Activated B cell treated with CpG ODN at 0.5 μM for 24 hours (primary cell): ENCODE measurements at regions of chr6 and their contacts with region 1.

Region 1: DNA sequence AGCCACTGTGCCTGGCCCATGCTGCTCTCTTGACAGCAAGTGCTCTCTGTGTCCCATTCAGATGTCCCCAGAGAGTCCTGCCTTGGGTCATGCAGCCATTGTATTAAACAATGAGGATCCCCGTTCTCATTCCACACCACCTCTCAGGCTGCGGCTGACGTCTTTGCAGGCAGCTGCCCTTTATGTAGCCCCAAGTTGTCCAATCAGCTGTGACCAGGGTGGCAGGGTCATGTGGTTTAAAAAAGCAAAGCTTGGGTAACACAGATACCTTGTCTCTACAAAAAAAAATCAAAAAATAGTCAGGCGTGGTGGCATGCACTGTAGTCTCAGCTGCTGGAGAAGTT is 13.2 kb downstream of the GCNT2 start:
- DNase-seq: peak; percentile 45
- ATAC-seq: peak; percentile 58
- H3K4me3 Mint-ChIP-seq: peak overlapping the region; percentile 88
- H3K27ac Mint-ChIP-seq: peak overlapping the region; percentile 99
- H3K4me1 Mint-ChIP-seq: peaks cover 92% of the 10 kb centered on the region
- H3K27me3 Mint-ChIP-seq: no peaks in the 10 kb centered on the region
- CTCF ChIP-seq: no peak

Region 2: GRCh38 chr6:10643201-10643651 is 108.8 kb after region 1 on chr6:
- CTCF ChIA-PET with region 1: no interaction called
- POLR2A ChIA-PET with region 1: interaction called, 8 read pairs
- intact Hi-C with region 1: loop called (anchors 2 kb)
- DNase-seq: no peak
- ATAC-seq: peak; percentile 91
- H3K4me3 Mint-ChIP-seq: peak overlapping the region; percentile 55
- H3K27ac Mint-ChIP-seq: peak overlapping the region; percentile 15
- H3K4me1 Mint-ChIP-seq: peaks cover 28% of the 10 kb centered on the region
- H3K27me3 Mint-ChIP-seq: no peaks in the 10 kb centered on the region
- CTCF ChIP-seq: no peak

Region 3: DNA sequence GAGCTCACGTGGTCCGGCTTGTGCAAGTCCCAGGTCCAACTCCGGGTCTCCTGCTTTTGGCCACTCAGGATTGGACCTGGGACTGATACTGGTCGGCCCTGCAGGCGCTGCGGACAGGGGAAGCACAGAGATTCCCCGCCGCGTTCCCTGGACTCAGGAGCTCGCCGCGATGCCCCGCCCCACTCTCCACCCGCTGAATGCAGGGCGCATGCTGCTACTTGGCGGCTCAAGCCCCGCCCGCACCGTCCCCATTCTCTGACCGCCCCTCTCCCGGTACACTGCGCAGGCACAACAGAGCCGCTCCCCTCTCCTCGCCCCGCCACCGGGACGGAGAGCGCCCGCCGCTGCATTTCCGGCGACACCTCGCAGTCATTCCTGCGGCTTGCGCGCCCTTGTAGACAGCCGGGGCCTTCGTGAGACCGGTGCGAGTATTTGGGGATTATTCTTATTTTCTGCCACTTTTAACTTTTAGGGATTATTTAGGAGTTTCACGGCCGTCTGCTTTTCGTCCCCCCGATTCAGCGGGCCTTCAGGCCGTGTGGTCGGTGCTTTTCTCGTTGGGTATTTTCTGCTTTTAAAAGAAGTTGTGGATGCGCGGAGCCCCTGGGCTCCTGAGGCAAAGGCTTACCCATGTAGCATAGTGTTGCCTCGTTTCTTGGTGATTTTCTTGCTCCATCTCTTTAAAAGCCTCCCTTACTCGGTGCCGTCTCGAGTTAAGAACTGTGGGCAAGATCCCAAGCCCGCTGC is 188.6 kb after region 1 on chr6 and contains the start of gene TMEM14C:
- CTCF ChIA-PET with region 1: no interaction called
- POLR2A ChIA-PET with region 1: interaction called, 11 read pairs
- intact Hi-C with region 1: no loop called
- DNase-seq: peak; percentile 78
- ATAC-seq: peak; percentile 98
- H3K4me3 Mint-ChIP-seq: peak within 1 kb of the TSS; percentile 93
- H3K27ac Mint-ChIP-seq: peak within 1 kb of the TSS; percentile 89
- H3K4me1 Mint-ChIP-seq: peaks cover 39% of the 10 kb centered on the region
- H3K27me3 Mint-ChIP-seq: no peaks in the 10 kb centered on the region
- CTCF ChIP-seq: no peak
- total RNA-seq, gene TMEM14C: 23.0 and 23.1 TPM in 2 replicates

Region 4: DNA sequence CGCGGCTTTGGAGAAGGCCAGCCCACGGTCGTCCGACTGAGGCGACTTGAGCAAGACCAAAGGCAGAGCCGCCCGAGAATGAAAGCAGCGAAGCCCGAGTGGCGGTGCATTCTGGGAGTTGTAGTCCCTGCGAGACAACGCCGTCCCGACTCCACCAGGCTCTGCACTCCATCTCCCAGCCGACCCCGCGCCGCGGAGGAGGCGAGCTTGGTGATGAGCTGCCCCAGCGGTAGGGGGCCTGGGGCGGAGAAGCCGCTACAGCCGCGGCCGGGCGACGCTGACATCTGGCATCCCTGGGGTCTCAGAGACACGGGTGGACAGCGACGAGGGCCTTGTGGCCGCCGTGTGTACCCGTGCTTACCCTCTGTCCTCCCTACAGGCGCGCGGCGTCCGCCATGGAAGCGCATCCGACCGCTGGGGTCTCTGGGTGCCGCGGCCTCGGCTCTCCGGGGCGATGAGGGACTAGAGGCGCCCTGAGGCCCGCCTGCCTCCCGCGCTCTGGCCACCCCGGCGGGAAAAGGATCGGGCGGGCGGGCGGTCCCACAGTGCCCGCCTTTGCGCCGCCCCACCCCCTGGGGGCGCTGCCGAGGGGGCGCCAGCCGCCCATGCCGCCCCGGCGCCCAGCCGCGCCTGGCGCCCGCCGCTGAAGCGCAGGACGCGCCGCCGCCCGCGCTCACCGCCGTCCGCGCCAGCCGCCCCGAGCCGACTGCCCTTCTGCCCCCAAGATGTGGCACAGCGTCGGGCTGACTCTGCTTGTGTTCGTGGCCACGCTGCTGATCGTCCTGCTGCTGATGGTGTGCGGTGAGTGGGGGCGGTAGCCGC is 559.4 kb after region 1 on chr6 and contains the start of gene SMIM13:
- CTCF ChIA-PET with region 1: no interaction called
- POLR2A ChIA-PET with region 1: no interaction called
- intact Hi-C with region 1: loop called (anchors 2 kb)
- DNase-seq: peak; percentile 90
- ATAC-seq: peak; percentile 90
- H3K4me3 Mint-ChIP-seq: peak within 1 kb of the TSS; percentile 96
- H3K27ac Mint-ChIP-seq: peak within 1 kb of the TSS; percentile 98
- H3K4me1 Mint-ChIP-seq: peaks cover 20% of the 10 kb centered on the region
- H3K27me3 Mint-ChIP-seq: peaks cover 3% of the 10 kb centered on the region
- CTCF ChIP-seq: no peak
- total RNA-seq, gene SMIM13: 5.8 and 5.9 TPM in 2 replicates

Region 5: GRCh38 chr6:11537229-11538051 is 1003.0 kb after region 1 on chr6 and contains the start of gene TMEM170B:
- CTCF ChIA-PET with region 1: no interaction called
- POLR2A ChIA-PET with region 1: no interaction called
- intact Hi-C with region 1: loop called (anchors 10 kb)
- DNase-seq: peak; percentile 99
- ATAC-seq: peak; percentile 94
- H3K4me3 Mint-ChIP-seq: peak within 1 kb of the TSS; percentile 84
- H3K27ac Mint-ChIP-seq: peak within 1 kb of the TSS; percentile 74
- H3K4me1 Mint-ChIP-seq: peaks cover 11% of the 10 kb centered on the region
- H3K27me3 Mint-ChIP-seq: no peaks in the 10 kb centered on the region
- CTCF ChIP-seq: no peak
- total RNA-seq, gene TMEM170B: 2.6 and 2.8 TPM in 2 replicates